WTC11 (cell line): ENCODE measurements at regions of chr2 and their contacts with region 1.

Region 1: DNA sequence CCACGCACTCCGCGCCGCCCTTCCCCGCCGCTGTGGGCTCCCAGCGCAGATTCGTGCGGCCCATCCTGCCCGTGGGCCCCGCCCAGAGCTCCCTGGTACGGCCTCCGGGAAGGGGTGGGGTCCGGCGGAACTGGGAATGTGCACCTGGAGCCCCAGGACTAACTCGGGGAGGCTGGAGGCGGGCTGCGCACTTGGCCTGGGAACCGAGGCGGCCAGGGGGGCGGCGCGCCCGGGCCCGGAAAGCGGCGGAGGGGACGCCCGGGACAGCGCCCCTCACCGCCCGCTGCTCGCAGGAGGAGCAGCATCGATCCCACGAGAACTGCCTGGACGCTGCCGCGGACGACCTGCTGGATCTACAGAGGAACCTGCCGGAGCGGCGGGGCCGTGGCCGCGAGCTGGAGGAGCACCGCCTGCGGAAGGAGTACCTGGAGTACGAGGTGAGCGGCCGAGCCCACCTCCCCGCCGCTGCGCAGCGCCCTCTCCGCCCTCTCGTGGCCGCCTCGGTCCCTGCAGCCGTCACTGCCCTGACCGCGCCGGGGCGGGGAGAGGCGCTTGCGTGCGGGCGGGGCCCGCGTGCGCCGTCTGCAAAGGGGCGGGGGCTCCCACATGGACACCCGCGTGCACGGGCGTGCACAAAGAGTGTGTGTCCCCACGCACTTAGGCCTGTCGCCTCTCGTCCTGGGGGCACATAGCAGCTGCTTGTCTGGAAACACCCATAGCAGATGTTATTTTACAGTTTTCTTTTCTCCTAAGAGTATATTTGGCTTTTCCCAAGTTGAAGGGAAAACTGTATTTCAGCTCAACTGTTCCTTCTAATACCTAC is 25.2 kb downstream of the PSD4 start:
- DNase-seq: peak; percentile 89
- ATAC-seq: peak; percentile 82
- H3K4me3 Mint-ChIP-seq: peak overlapping the region; percentile 65
- H3K27ac Mint-ChIP-seq: no peak overlapping the region
- H3K4me1 Mint-ChIP-seq: peaks cover under 1% of the 10 kb centered on the region; the same call in 1 of the 2 replicates
- H3K27me3 Mint-ChIP-seq: peaks cover 22% of the 10 kb centered on the region
- CTCF ChIP-seq: peak; percentile 79

Region 2: DNA sequence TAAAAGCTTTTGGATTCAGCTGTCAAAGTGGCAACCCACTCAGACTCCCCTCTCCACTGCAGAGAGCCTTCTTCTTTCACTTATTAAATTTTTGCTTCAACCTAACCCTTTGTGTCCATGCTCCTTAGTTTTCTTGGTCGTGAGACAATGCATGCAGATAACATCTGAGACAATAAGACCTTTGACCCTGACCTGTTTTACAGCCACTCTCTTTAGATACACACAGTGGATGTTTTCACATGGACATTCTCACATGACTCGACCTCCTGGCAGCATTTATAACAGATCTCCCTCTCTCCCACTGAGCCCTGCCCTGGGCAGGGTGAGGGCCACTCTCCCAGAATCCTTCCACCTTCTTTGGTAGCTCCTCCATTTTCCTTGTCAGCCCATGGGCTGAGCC is 251.6 kb before region 1 on chr2:
- CTCF ChIA-PET with region 1: no interaction called
- POLR2A ChIA-PET with region 1: no interaction called
- DNase-seq: no peak
- ATAC-seq: no peak
- H3K4me3 Mint-ChIP-seq: no peak overlapping the region
- H3K27ac Mint-ChIP-seq: no peak overlapping the region
- H3K4me1 Mint-ChIP-seq: no peaks in the 10 kb centered on the region
- H3K27me3 Mint-ChIP-seq: peaks cover 44% of the 10 kb centered on the region
- CTCF ChIP-seq: no peak

Region 3: DNA sequence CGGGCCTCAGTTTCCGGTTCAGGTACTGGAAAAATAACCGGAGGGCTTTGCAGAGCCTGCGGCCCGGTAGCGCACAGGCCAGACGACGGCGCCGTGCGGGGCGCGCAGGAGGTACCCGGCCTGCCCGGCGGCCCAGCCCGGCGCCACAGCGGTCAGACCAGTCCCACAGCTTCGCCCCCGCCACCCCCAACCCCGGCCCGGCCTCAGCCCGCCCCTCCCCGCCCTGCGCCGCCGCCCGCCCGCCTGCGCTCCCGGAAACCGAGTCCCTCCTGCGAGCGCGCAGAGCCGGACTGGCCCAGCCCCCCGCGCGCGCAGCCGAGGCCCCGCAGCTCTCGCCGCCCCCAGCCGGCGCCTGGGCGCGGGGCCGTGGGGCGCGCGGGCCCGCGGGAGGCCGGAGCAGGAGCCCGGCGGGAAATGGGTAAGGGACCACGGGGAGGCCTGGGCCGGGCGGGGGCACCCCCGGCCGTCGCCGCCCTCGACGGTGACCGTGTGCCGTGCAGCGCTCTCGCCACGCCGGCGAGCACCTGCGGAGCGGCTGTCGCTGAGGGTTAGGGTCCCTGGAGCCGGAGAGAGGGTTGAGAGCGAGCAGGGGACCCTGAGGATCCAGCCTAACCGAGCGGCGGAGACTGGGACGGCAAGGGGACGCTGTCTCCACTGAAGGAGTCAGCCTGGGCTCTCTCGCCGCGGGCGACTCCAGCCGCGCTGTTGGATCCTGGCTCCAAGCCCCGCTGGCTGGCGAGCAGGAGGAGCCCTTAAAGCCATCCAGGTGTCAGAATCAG is 41.7 kb before region 1 on chr2:
- CTCF ChIA-PET with region 1: interaction called, 47 read pairs
- POLR2A ChIA-PET with region 1: no interaction called
- DNase-seq: peak; percentile 56
- ATAC-seq: peak; percentile 82
- H3K4me3 Mint-ChIP-seq: peak overlapping the region; percentile 65
- H3K27ac Mint-ChIP-seq: no peak overlapping the region
- H3K4me1 Mint-ChIP-seq: peaks cover 12% of the 10 kb centered on the region
- H3K27me3 Mint-ChIP-seq: peaks cover 30% of the 10 kb centered on the region
- CTCF ChIP-seq: no peak

Region 4: GRCh38 chr2:113181258-113182051 is 17.5 kb before region 1 on chr2:
- CTCF ChIA-PET with region 1: interaction called, 21 read pairs
- POLR2A ChIA-PET with region 1: no interaction called
- DNase-seq: no peak
- ATAC-seq: no peak
- H3K4me3 Mint-ChIP-seq: no peak overlapping the region
- H3K27ac Mint-ChIP-seq: no peak overlapping the region
- H3K4me1 Mint-ChIP-seq: peaks cover 13% of the 10 kb centered on the region
- H3K27me3 Mint-ChIP-seq: no peaks in the 10 kb centered on the region; the same call in 1 of the 2 replicates
- CTCF ChIP-seq: no peak

Region 5: DNA sequence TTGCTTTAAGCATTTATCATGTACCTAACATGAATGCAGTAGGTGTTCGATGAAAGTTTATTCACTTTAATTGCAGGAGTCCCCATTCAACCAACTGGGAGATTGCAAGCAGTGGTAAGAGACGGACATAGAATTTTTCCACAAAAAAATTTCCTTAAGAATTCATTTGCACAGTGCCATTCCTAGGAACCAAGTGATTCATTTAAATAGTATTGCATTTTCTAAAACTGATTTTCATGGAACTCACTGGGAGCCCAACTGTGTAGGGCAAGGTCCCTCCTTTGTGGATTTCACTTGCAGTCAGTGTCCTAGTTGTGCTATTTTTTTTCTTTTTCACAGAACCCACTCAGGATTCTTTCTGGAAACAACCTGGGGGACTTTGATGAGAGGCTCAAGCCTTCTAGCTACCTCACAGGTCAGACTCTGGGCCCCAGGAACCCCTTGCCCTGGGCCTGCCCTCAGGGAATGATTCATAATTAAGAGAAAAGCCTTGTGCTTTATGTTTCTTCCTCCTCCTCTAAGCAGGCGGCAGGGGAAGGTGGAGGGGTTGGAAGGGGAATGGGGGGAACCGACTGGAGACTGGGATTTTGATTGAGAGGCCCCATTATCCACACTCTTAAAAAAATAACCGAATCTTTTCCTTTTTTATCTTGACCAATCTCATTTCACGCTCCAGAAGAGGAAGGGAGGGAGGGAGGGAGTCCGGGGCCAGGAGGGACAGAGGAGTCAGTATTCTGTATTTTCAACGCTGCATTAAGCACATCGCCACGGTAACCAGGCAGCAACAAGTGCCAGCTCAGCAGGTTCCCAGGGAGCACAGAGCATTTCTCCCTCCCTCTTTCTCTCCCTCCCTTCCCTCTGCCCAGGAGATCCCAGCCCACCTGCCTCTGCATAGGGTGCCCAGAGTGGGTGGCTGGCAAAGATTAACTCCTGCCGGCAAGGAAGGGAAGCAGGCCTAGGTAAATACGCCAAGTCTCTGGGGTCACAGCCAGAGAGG is 26.6 kb after region 1 on chr2:
- CTCF ChIA-PET with region 1: interaction called, 13 read pairs
- POLR2A ChIA-PET with region 1: no interaction called
- DNase-seq: peak; percentile 45
- ATAC-seq: peak; percentile 79
- H3K4me3 Mint-ChIP-seq: peak overlapping the region; percentile 25; the same call in 1 of the 2 replicates
- H3K27ac Mint-ChIP-seq: no peak overlapping the region
- H3K4me1 Mint-ChIP-seq: peaks cover 24% of the 10 kb centered on the region
- H3K27me3 Mint-ChIP-seq: no peaks in the 10 kb centered on the region; the same call in 1 of the 2 replicates
- CTCF ChIP-seq: no peak

Region 6: DNA sequence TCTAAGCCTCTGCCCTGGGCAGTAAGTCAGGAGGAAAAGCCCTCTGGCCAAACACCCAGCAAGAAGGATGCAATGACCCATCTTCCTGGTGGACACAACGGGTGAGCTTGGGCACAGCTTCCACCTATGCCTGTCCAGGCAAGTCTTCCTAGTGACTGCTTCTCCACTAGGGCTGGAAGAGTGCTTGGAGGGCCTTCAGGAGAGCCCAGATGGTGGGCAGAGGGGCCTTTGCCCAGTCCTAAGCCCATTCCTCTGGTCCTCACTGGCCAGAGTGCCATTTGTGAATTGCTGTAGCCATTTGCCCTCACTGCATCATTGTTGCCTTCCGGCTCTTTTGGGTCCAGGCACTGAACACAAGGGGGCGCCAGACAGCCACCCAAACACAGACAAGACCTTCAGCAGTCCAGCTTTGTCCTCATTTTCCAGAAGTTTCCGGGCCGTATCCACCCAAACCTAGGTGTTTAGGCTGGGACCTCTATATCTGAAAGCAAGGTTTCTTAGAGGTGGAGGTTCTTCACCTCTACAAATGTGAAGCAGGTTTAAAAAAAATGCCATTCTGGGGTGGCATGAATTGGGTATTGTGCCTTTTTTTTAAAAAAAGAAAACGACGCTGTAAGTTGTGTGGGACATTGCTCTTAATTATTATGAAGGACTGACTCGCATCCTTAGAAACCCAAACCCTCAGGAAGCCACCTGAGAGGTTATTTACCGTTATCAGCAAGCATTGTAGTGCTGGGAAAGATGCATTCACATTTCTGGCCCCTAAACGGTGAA is 50.2 kb after region 1 on chr2:
- CTCF ChIA-PET with region 1: interaction called, 18 read pairs
- POLR2A ChIA-PET with region 1: no interaction called
- DNase-seq: peak; percentile 81
- ATAC-seq: peak; percentile 89
- H3K4me3 Mint-ChIP-seq: no peak overlapping the region
- H3K27ac Mint-ChIP-seq: no peak overlapping the region
- H3K4me1 Mint-ChIP-seq: peaks cover 5% of the 10 kb centered on the region
- H3K27me3 Mint-ChIP-seq: peaks cover 6% of the 10 kb centered on the region
- CTCF ChIP-seq: peak; percentile 94